ENCODE measurements at regions of chr3 and their contacts with region 1.

Region 1: GRCh38 chr3:178982137-178982536 is 89.5 kb downstream of the ZMAT3 start:
- DNase-seq: no peak
- H3K4me3 ChIP-seq: no peak overlapping the region
- H3K4me3 Mint-ChIP-seq: no peak overlapping the region
- H3K27ac Mint-ChIP-seq: no peak overlapping the region
- H3K4me1 ChIP-seq: no peaks in the 10 kb centered on the region
- H3K4me1 Mint-ChIP-seq: no peaks in the 10 kb centered on the region
- H3K27me3 ChIP-seq: no peaks in the 10 kb centered on the region
- H3K27me3 Mint-ChIP-seq: no peaks in the 10 kb centered on the region
- CTCF ChIP-seq: no peak

Region 2: GRCh38 chr3:177057768-177058167 is 1924.4 kb before region 1 on chr3:
- CTCF ChIA-PET with region 1: no interaction called
- POLR2A ChIA-PET with region 1: interaction called, 13 read pairs
- intact Hi-C with region 1: no loop called
- DNase-seq: no peak
- H3K4me3 ChIP-seq: no peak overlapping the region
- H3K4me3 Mint-ChIP-seq: no peak overlapping the region
- H3K27ac Mint-ChIP-seq: no peak overlapping the region
- H3K4me1 ChIP-seq: no peaks in the 10 kb centered on the region
- H3K4me1 Mint-ChIP-seq: no peaks in the 10 kb centered on the region
- H3K27me3 ChIP-seq: no peaks in the 10 kb centered on the region
- H3K27me3 Mint-ChIP-seq: no peaks in the 10 kb centered on the region
- CTCF ChIP-seq: no peak

Measured in Caco-2 (cell line).